Naive thymus-derived CD4-positive, alpha-beta T cell (primary cell): ENCODE measurements at regions of chr9 and their contacts with region 1.

Region 1: DNA sequence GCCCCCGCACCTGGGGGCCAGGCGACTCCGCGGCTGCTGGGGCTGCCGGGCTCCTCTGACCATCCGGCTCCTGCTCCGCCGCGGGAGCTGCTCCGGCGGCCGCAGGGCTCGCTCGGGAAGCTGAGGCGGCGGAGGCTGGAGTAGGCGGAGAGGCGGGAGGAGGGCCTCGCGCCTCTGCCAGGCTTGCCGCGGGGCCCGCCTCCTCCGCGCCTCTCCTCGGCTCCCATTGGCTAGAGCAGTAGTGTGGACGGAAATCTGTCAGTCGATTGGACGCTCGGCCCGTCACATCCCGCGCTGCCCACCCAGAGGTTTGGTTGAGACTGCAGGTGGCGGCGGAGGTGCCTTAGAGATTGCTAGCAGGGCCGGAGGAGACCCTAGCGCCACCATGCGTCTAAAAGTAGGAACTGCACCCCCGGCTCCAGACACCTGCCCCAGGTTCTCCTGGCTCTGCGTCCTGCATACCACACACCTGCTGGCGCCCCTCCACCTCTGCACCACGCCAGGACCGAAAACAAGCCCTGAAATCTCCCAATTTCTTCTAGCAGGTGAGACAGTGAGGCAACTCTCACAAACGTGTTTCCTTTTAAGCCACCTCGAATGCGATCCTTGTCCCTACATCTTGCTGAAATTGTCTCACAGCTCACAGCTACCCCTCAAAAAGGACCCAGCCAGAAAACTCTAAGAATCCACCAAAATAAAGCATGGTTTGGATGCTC is at the start of gene SCAI:
- DNase-seq: peak; percentile 85 to 99 (median 98)
- ATAC-seq: peak; percentile 99
- H3K4me3 ChIP-seq: peak within 1 kb of the TSS; percentile 73
- H3K4me3 Mint-ChIP-seq: peak within 1 kb of the TSS; percentile 90 to 99 (median 97)
- H3K27ac ChIP-seq: peak within 1 kb of the TSS; percentile 70
- H3K27ac Mint-ChIP-seq: peak within 1 kb of the TSS; percentile 82 to 94 (median 89)
- H3K4me1 ChIP-seq: peaks cover 0 to 17% of the 10 kb centered on the region in 2 donors
- H3K4me1 Mint-ChIP-seq: peaks cover 21 to 52% (median 44%) of the 10 kb centered on the region in 7 donors
- H3K27me3 ChIP-seq: no peaks in the 10 kb centered on the region
- H3K27me3 Mint-ChIP-seq: no peaks in the 10 kb centered on the region
- total RNA-seq, gene SCAI: 12.8 to 23.9 (median 16.6) TPM

Region 2: GRCh38 chr9:124852829-124853531 is 290.6 kb before region 1 on chr9 and contains the start of gene WDR38:
- CTCF ChIA-PET with region 1: interaction called, 3 read pairs
- POLR2A ChIA-PET with region 1: no interaction called
- intact Hi-C with region 1: loop called in 1 of 2 experiments (anchors 5 kb)
- DNase-seq: peak; percentile 55 to 86 (median 76)
- ATAC-seq: peak; percentile 95
- H3K4me3 ChIP-seq: peak within 1 kb of the TSS; percentile 50
- H3K4me3 Mint-ChIP-seq: peak within 1 kb of the TSS in 9 of 10 donors; percentile 64 to 79 (median 68)
- H3K27ac ChIP-seq: peak within 1 kb of the TSS; percentile 46
- H3K27ac Mint-ChIP-seq: peak within 1 kb of the TSS in 3 of 9 donors; percentile 9 to 23 (median 19)
- H3K4me1 ChIP-seq: peaks cover 8% of the 10 kb centered on the region in 2 donors
- H3K4me1 Mint-ChIP-seq: peaks cover 4 to 14% (median 6%) of the 10 kb centered on the region in 7 donors
- H3K27me3 ChIP-seq: no peaks in the 10 kb centered on the region
- H3K27me3 Mint-ChIP-seq: peaks cover 5 to 16% (median 9%) of the 10 kb centered on the region in 5 donors
- total RNA-seq, gene WDR38: not detected

Region 3: DNA sequence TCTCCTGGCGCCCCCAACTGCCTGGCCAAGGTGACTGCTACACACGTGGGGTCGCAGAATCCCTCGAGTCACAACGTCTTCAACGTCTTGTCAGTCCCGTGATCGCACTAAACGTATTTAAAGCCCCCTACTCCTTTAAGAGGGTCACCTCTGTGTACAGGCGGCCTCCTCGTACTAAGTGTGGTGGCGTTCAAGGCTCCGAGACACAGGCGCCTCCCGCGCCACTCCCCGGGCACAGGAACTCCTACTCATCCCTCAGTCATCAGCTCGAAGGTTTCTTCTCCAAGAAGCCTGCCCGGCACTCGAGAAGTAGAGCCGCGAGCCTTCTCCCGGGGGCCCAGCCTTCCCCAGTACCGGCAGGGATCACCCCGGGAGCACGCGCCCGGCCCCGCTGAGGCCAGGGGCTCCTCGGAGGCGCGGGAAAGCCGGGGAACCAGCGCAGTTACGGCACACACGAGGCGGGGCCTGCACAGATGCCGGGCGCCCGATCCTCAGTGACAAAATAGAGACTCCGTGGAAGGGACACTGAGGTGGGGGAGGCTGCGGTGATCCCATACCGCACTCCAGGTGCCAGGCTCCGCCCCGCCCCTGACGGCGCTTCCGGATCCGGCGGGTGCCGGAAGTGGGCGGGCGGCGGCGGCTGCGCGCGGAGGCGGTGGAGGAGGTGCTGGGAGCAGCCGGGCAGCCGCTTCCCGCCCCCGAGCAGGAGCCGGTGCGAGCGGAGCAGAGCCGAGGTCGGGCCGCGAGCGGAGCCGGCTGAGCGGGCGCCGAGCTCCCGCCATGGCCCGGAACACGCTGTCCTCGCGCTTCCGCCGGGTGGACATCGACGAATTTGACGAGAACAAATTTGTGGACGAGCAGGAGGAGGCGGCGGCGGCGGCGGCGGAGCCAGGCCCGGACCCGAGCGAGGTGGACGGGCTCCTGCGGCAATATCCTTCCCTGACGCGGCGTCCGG is 274.7 kb before region 1 on chr9:
- CTCF ChIA-PET with region 1: interaction called, 3 read pairs
- POLR2A ChIA-PET with region 1: no interaction called
- intact Hi-C with region 1: loop called (anchors 1 to 2 kb)
- DNase-seq: peak; percentile 84 to 99 (median 91)
- ATAC-seq: peak; percentile 89
- H3K4me3 ChIP-seq: peak overlapping the region; percentile 95
- H3K4me3 Mint-ChIP-seq: peak overlapping the region; percentile 87 to 96 (median 93)
- H3K27ac ChIP-seq: peak overlapping the region; percentile 87
- H3K27ac Mint-ChIP-seq: peak overlapping the region; percentile 82 to 98 (median 89)
- H3K4me1 ChIP-seq: peaks cover 29 to 39% of the 10 kb centered on the region in 2 donors
- H3K4me1 Mint-ChIP-seq: peaks cover 20 to 55% (median 47%) of the 10 kb centered on the region in 7 donors
- H3K27me3 ChIP-seq: no peaks in the 10 kb centered on the region
- H3K27me3 Mint-ChIP-seq: no peaks in the 10 kb centered on the region

Region 4: DNA sequence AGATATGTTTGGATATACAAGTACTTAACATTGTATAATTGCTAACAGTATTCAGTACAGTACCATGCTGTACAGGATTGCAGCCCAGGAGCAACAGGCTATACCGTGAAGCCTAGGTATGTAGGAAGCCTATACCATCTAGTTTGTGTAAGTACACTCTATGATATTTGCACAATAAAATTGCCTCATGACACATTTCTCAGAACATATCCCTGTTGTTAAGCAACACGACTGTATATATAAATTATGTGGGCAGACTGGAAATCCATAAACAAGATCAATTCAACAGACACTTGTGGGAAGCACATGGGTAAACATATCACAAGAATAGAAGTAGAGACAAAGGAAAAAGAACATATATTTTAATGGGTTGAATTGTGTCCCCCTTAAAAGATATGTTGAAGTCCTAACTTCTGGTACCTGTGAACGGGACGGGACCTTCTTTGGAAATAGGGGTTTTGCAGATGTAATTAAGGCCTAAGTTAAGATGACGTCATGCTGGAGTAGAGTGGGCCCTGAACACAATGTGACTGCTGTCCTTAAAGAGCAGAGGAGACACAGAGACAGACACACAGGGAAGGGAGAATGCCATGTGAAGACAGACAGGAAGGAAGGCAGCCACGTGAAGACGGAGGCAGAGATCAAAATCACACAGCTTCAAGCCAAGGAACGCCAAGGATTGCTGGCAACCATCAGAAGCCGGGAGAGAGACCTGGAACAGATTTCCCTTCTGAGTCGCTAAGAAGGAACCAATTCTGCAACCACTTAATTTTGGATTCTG is 76.5 kb before region 1 on chr9:
- CTCF ChIA-PET with region 1: interaction called, 3 read pairs
- POLR2A ChIA-PET with region 1: no interaction called
- intact Hi-C with region 1: loop called in 1 of 2 experiments (anchors 5 kb)
- DNase-seq: no peak
- ATAC-seq: no peak
- H3K4me3 ChIP-seq: no peak overlapping the region
- H3K4me3 Mint-ChIP-seq: no peak overlapping the region
- H3K27ac ChIP-seq: no peak overlapping the region
- H3K27ac Mint-ChIP-seq: peak overlapping the region in 7 of 9 donors; percentile 16 to 67 (median 29)
- H3K4me1 ChIP-seq: no peaks in the 10 kb centered on the region
- H3K4me1 Mint-ChIP-seq: peaks cover 0 to 17% (median 13%) of the 10 kb centered on the region in 7 donors
- H3K27me3 ChIP-seq: no peaks in the 10 kb centered on the region
- H3K27me3 Mint-ChIP-seq: no peaks in the 10 kb centered on the region

Region 5: GRCh38 chr9:125126019-125126746 is 17.4 kb before region 1 on chr9:
- CTCF ChIA-PET with region 1: interaction called, 25 read pairs
- POLR2A ChIA-PET with region 1: interaction called, 39 read pairs
- intact Hi-C with region 1: loop called (anchors 1 kb)
- DNase-seq: peak; percentile 55 to 93 (median 88)
- ATAC-seq: peak; percentile 100
- H3K4me3 ChIP-seq: no peak overlapping the region
- H3K4me3 Mint-ChIP-seq: peak overlapping the region; percentile 67 to 87 (median 82)
- H3K27ac ChIP-seq: peak overlapping the region; percentile 27
- H3K27ac Mint-ChIP-seq: peak overlapping the region; percentile 84 to 98 (median 96)
- H3K4me1 ChIP-seq: peaks cover 18 to 36% of the 10 kb centered on the region in 2 donors
- H3K4me1 Mint-ChIP-seq: peaks cover 29 to 57% (median 38%) of the 10 kb centered on the region in 7 donors
- H3K27me3 ChIP-seq: no peaks in the 10 kb centered on the region
- H3K27me3 Mint-ChIP-seq: no peaks in the 10 kb centered on the region

Region 6: GRCh38 chr9:125200210-125201047 is 56.9 kb after region 1 on chr9 and contains the start of gene RABEPK:
- CTCF ChIA-PET with region 1: no interaction called
- POLR2A ChIA-PET with region 1: interaction called, 5 read pairs
- intact Hi-C with region 1: loop called (anchors 1 to 2 kb)
- DNase-seq: peak; percentile 76 to 97 (median 83)
- ATAC-seq: peak; percentile 99
- H3K4me3 ChIP-seq: peak within 1 kb of the TSS; percentile 90
- H3K4me3 Mint-ChIP-seq: peak within 1 kb of the TSS; percentile 80 to 96 (median 93)
- H3K27ac ChIP-seq: peak within 1 kb of the TSS; percentile 89
- H3K27ac Mint-ChIP-seq: peak within 1 kb of the TSS; percentile 80 to 96 (median 92)
- H3K4me1 ChIP-seq: peaks cover 20 to 34% of the 10 kb centered on the region in 2 donors
- H3K4me1 Mint-ChIP-seq: peaks cover 24 to 74% (median 56%) of the 10 kb centered on the region in 7 donors
- H3K27me3 ChIP-seq: no peaks in the 10 kb centered on the region
- H3K27me3 Mint-ChIP-seq: peaks cover 0 to 10% (median 0%) of the 10 kb centered on the region in 5 donors
- total RNA-seq, gene RABEPK: 10.7 to 19.5 (median 15.1) TPM

Region 7: GRCh38 chr9:125261501-125262293 is 118.2 kb after region 1 on chr9 and contains the start of gene GAPVD1:
- CTCF ChIA-PET with region 1: no interaction called
- POLR2A ChIA-PET with region 1: interaction called, 3 read pairs
- intact Hi-C with region 1: loop called in 1 of 2 experiments (anchors 1 kb)
- DNase-seq: peak; percentile 83 to 95 (median 89)
- ATAC-seq: peak; percentile 97
- H3K4me3 ChIP-seq: peak within 1 kb of the TSS; percentile 97
- H3K4me3 Mint-ChIP-seq: peak within 1 kb of the TSS; percentile 82 to 99 (median 98)
- H3K27ac ChIP-seq: peak within 1 kb of the TSS; percentile 94
- H3K27ac Mint-ChIP-seq: peak within 1 kb of the TSS; percentile 83 to 99 (median 94)
- H3K4me1 ChIP-seq: peaks cover 8 to 24% of the 10 kb centered on the region in 2 donors
- H3K4me1 Mint-ChIP-seq: peaks cover 21 to 48% (median 42%) of the 10 kb centered on the region in 7 donors
- H3K27me3 ChIP-seq: no peaks in the 10 kb centered on the region
- H3K27me3 Mint-ChIP-seq: no peaks in the 10 kb centered on the region
- total RNA-seq, gene GAPVD1: 57.3 to 68.9 (median 65.0) TPM